ENCODE measurements at regions of chr1 and their contacts with region 1.

Region 1: GRCh38 chr1:154558575-154559465 is at the start of gene UBE2Q1:
- DNase-seq: peak; percentile 98
- CTCF ChIP-seq: no peak

Region 2: GRCh38 chr1:154479764-154480421 is 78.9 kb before region 1 on chr1:
- CTCF ChIA-PET with region 1: interaction called, 369 read pairs
- POLR2A ChIA-PET with region 1: no interaction called
- DNase-seq: peak; percentile 74
- CTCF ChIP-seq: peak; percentile 81

Region 3: GRCh38 chr1:154574716-154575115 is 15.9 kb after region 1 on chr1:
- CTCF ChIA-PET with region 1: interaction called, 19 read pairs
- POLR2A ChIA-PET with region 1: no interaction called
- DNase-seq: no peak
- CTCF ChIP-seq: no peak

Region 4: GRCh38 chr1:154760469-154760933 is 201.7 kb after region 1 on chr1:
- CTCF ChIA-PET with region 1: interaction called, 10 read pairs
- POLR2A ChIA-PET with region 1: no interaction called
- DNase-seq: peak; percentile 88
- CTCF ChIP-seq: peak; percentile 85

Region 5: DNA sequence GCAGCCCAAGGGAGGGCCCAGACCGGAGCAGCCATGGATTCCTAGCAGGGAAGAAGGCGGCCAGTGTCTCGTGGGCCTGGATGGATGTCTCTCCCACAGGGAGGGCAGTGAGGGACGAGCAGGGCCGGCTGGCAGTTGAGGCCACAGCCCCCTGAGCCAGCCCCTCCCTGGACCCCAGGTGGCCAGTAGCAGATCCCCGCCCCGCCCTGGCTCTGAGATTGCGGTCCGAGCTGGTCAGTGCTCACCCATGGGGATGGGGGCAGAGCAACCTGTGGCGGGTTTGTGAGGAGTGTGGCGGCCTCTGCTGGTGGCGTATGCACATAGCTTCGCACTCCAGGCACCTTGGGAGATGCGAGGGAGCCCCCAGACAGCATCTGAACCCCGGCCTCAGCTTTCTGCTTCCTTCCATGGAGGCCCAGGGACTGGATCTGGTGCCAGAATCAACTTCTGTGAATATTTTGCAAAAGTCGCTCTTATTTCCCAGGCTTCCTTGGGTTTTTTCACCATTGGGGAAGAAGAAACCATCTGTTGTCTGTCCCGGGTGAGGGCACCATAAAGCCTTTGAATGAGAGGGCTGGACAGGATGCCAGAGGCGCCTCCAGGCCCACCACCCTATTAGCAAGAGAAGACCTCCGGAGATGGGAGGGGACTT is 319.7 kb after region 1 on chr1:
- CTCF ChIA-PET with region 1: interaction called, 37 read pairs
- POLR2A ChIA-PET with region 1: no interaction called
- DNase-seq: peak; percentile 84
- CTCF ChIP-seq: peak; percentile 88

Measured in GM10248 (cell line).